ENCODE measurements at regions of chr3 and their contacts with region 1.

Region 1: GRCh38 chr3:151282921-151283320 is 4.6 kb upstream of the P2RY14 start:
- DNase-seq: peak; percentile 24
- ATAC-seq: peak; percentile 78
- H3K4me3 ChIP-seq: no peak overlapping the region
- H3K27ac ChIP-seq: no peak overlapping the region
- H3K4me1 ChIP-seq: no peaks in the 10 kb centered on the region
- H3K27me3 ChIP-seq: no peaks in the 10 kb centered on the region; the same call in 1 of the 2 replicates
- CTCF ChIP-seq: peak; percentile 71; the same call in 1 of the 2 replicates

Region 2: GRCh38 chr3:151086484-151087456 is 196.2 kb before region 1 on chr3:
- CTCF ChIA-PET with region 1: no interaction called
- POLR2A ChIA-PET with region 1: no interaction called
- in situ Hi-C with region 1: no loop called
- intact Hi-C with region 1: no loop called
- DNase-seq: peak; percentile 15
- ATAC-seq: peak; percentile 93
- H3K4me3 ChIP-seq: peak overlapping the region; percentile 56 to 65
- H3K27ac ChIP-seq: no peak overlapping the region
- H3K4me1 ChIP-seq: no peaks in the 10 kb centered on the region; the same call in 1 of the 2 replicates
- H3K27me3 ChIP-seq: peaks cover 21% of the 10 kb centered on the region
- CTCF ChIP-seq: peak; percentile 73

Region 3: DNA sequence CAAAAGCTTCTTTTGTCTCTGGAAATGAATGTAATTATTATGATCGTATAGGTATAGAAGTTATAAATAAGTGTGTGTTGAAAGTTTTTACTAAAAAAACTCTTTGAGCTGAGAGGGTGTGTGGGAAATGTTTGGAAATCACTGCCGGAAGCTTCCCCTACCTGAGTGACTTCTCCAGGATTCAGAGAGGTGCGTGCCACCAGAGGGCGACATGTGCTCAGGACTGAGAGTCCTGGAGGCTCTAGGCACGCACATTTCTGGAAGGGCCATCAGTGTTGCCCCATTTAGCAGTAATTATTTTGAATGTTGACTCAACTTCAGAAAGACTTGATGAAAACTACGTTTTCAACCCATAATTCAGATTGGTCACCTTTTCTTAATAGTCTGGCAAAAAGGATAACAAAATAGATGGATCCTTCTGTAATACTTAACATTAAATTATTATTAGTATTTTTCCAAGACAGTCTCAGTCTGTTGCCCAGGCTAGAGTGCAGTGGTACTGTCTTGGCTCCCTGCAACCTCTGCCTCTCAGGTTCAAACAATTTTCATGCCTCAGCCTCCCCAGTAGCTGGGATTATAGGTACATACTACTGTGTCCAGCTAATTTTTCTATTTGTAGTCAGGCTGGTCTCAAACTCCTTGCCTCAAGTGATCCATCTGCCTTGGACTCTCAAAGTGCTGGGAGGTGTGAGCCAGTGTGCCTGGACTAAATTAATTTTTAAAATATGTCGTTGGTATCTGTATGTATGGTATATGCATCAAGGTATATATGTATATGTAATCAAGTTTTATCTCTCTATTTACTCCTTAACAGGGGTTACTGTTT is 114.4 kb before region 1 on chr3:
- CTCF ChIA-PET with region 1: interaction called, 3 read pairs
- POLR2A ChIA-PET with region 1: no interaction called
- in situ Hi-C with region 1: no loop called
- intact Hi-C with region 1: loop called (anchors 1 kb)
- DNase-seq: peak; percentile 28
- ATAC-seq: peak; percentile 96
- H3K4me3 ChIP-seq: no peak overlapping the region
- H3K27ac ChIP-seq: no peak overlapping the region
- H3K4me1 ChIP-seq: no peaks in the 10 kb centered on the region
- H3K27me3 ChIP-seq: no peaks in the 10 kb centered on the region; the same call in 1 of the 2 replicates
- CTCF ChIP-seq: peak; percentile 97

Region 4: DNA sequence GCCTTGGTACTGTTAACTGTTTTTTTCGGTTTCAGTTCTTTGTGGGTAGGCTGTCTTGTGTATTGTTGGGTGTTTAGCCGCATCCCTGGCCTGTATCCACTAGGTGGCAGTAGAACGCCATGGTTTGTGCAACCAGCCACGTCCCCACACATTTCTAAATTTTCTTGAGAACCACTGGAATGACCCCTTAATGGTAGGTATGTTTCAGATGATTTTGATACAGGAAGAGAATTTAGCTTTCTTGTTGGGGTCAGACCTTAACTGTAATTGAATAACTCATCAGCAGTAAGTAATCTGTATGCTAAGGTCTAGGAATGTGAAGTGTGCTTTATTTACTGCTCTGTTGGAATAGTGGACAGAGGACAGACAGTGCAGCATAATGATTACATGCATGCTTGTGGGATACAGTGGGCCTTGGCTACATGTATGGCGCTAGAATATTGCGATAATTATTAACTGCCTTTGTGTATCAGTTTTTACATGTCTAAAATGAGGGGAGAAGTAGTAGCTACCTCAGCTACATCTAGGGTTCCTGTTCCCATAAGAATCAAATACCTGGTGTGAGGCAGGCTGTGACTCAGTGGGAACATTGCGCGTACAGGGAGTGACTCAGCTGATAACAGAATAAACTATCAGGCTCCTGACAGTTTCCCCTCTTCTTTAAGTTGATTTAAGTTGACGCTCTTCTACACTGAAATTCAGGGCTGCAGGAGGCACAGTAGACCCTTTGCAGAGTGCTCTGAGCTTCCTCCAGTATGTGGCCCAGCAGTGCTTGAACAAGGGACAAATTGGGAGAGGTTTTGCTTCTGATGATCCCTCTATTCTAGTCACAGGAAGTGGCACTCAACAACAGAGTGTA is 54.9 kb before region 1 on chr3:
- CTCF ChIA-PET with region 1: interaction called, 9 read pairs
- POLR2A ChIA-PET with region 1: interaction called, 7 read pairs
- in situ Hi-C with region 1: no loop called
- intact Hi-C with region 1: loop called (anchors 1 kb)
- DNase-seq: peak; percentile 63
- ATAC-seq: peak; percentile 90
- H3K4me3 ChIP-seq: no peak overlapping the region
- H3K27ac ChIP-seq: no peak overlapping the region
- H3K4me1 ChIP-seq: no peaks in the 10 kb centered on the region
- H3K27me3 ChIP-seq: no peaks in the 10 kb centered on the region
- CTCF ChIP-seq: peak; percentile 94